ENCODE measurements at regions of chr14 and their contacts with region 1.

Region 1: DNA sequence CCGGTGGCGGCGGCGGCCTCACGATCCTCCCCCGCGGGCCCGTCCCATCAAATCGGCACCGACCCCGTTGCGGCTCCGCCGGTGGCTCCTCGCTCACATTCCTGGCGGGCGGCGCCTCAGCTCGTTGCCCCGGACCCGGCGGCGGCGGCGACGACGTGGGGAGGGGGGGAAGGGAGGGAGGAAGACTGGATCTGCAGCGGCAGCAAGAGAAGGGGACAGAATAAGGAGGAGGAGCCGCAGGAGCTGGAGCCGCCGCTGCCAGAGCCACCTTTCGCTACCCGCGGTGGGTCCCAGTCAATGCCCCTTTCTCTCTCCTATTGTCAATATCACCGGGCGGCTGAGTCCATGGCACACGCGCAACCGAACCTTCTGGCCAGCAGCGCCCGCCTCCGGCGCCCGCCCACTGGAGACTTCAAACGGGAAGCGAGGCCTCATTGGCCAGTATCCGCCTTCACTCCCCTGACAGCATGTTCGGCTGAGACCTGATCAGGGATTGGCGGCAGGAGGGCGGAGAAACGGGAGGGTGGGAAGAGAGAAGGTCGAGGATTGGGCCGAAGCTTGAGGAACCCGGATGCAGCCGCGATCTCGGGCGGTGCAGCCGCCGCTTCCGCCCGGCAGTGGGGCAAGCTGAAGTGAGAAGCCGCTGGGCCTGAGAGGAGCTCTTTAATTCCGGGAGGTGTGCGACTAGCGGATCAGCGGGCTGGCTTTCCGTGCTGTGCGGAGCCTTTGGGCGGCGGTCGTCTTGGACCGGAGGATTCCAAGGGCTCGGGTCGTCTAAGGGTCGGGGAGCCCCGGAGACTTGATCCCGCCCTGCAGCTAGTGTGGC is at the start of gene PPP2R5E:
- DNase-seq: peak; percentile 93 to 99 (median 98)
- ATAC-seq: peak; percentile 96 to 98 (median 98)
- H3K4me3 ChIP-seq: peak within 1 kb of the TSS; percentile 91 to 98 (median 96)
- H3K27ac ChIP-seq: peak within 1 kb of the TSS; percentile 80 to 94 (median 88)
- H3K4me1 ChIP-seq: peaks cover 0 to 11% (median 0%) of the 10 kb centered on the region in 3 donors
- H3K27me3 ChIP-seq: no peaks in the 10 kb centered on the region
- CTCF ChIP-seq: no peak
- total RNA-seq, gene PPP2R5E: 11.7 to 25.6 (median 16.2) TPM

Region 2: DNA sequence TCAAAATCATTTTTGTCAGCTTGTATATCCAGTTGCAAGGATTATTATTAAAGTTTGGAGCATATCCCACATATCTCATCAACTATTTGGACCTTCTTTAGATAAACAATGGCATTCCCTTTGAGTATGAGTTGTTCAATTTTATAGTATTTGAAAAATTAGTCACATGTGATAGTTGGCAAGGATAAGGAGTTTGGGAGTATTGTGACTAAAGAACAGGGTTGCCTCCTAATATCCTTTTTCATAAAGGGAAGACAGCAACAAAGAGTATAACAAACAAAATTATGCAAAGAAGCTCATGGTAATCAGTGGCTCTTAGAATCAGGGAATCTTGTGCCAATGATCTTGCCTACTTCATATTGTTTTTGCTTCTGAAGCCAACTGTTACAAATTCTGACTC is 466.7 kb before region 1 on chr14:
- intact Hi-C with region 1: no loop called
- DNase-seq: no peak
- ATAC-seq: no peak
- H3K4me3 ChIP-seq: no peak overlapping the region
- H3K27ac ChIP-seq: no peak overlapping the region
- H3K4me1 ChIP-seq: no peaks in the 10 kb centered on the region
- H3K27me3 ChIP-seq: no peaks in the 10 kb centered on the region
- CTCF ChIP-seq: no peak

Region 3: GRCh38 chr14:63322897-63323573 is 220.2 kb before region 1 on chr14:
- intact Hi-C with region 1: no loop called
- DNase-seq: no peak
- ATAC-seq: no peak
- H3K4me3 ChIP-seq: no peak overlapping the region
- H3K27ac ChIP-seq: no peak overlapping the region
- H3K4me1 ChIP-seq: no peaks in the 10 kb centered on the region
- H3K27me3 ChIP-seq: no peaks in the 10 kb centered on the region
- CTCF ChIP-seq: no peak

Region 4: GRCh38 chr14:63388763-63389431 is 154.3 kb before region 1 on chr14:
- intact Hi-C with region 1: loop called in 1 of 3 experiments (anchors 10 kb)
- DNase-seq: peak; percentile 29 to 79 (median 59)
- ATAC-seq: peak; percentile 84 to 97 (median 94)
- H3K4me3 ChIP-seq: no peak overlapping the region
- H3K27ac ChIP-seq: no peak overlapping the region
- H3K4me1 ChIP-seq: peaks cover 0 to 5% (median 3%) of the 10 kb centered on the region in 3 donors
- H3K27me3 ChIP-seq: no peaks in the 10 kb centered on the region
- CTCF ChIP-seq: peak; percentile 47 to 70 (median 60)

Region 5: DNA sequence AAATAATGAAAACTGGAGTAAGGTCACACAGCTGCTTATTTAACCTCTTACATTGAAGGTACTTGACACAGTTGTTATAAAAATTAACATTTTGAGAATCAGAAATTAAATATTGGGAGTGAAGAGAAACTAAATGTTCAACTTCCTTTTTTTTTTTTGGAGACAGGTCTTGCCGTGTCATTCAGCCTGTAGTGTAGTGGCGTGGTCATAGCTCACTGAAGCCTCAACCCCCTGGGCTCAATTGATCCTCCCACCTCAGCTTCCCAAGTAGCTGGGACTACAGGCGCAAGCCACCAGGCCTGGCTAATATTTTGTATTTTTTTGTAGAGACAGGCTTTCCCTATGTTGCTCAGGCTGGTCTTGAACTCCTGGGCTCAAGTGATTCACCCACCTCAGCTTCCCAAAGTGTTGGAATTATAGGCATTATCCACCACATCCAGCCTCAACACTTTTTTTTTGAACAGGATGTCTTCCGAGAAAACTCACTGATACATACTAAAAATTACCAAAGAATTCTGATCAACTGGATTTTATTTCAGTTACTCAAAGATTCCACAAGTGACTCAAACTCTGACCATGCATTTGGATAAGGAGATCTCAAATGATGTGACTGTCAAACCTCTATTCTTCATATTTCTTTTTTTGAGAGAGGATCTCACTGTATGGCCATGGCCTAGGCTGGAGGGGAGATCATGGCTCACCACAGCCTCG is 149.3 kb after region 1 on chr14:
- intact Hi-C with region 1: no loop called
- DNase-seq: no peak
- ATAC-seq: no peak
- H3K4me3 ChIP-seq: no peak overlapping the region
- H3K27ac ChIP-seq: no peak overlapping the region
- H3K4me1 ChIP-seq: no peaks in the 10 kb centered on the region
- H3K27me3 ChIP-seq: no peaks in the 10 kb centered on the region
- CTCF ChIP-seq: no peak